RWPE1 (cell line): ENCODE measurements at regions of chr1 and their contacts with region 1.

Region 1: DNA sequence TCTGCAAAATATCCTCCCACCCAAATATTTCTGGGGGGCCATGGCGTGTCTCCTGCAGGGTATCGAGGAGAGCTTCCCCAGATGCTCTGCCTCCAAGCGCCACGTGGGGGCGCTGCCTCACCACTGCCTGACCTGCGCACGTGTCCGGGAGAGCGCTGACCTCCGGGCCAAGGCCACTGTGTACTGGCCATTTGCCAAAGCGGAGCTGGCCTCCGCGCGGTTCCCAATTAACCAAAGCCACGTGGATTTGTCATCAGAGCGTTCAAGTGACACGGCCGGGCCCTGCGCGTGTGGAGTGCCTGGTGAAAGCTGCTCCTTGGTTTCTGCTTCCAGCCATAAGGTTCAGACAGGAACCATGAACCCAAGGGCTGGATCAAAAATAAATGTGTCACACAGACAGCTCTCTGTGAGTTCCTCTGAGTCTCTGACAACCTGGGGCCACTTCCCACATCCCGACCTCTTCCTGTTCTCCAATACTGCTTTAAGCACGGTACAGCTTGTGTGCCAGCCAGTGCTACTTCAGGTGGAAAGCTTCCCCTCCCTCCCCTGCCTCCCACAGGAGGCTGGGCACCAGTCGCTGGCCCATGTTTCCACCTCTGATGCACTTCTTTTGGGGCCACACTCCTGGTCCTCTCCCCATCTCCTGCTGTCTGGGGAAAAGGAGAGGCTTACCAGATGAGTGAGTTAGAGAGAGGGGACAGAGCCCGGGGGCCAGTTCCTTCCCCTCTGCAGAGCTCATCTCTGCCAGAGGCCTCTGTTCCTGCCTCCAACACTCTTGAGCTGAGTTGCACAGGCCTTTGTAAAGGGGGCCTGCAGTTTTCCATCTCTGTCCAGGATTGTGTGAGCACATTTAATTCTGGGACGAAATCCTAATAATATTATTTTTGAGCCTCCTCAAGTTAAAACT is 26.1 kb downstream of the ZP4 start:
- DNase-seq: peak; percentile 38
- H3K27ac ChIP-seq: no peak overlapping the region
- CTCF ChIP-seq: peak; percentile 95

Region 2: GRCh38 chr1:237814319-237814924 is 50.2 kb before region 1 on chr1:
- CTCF ChIA-PET with region 1: no interaction called
- POLR2A ChIA-PET with region 1: no interaction called
- DNase-seq: no peak
- H3K27ac ChIP-seq: no peak overlapping the region
- CTCF ChIP-seq: peak; percentile 23; the same call in 1 of the 2 replicates

Region 3: GRCh38 chr1:237851210-237851845 is 13.3 kb before region 1 on chr1:
- CTCF ChIA-PET with region 1: interaction called, 20 read pairs
- POLR2A ChIA-PET with region 1: no interaction called
- DNase-seq: peak; percentile 29
- H3K27ac ChIP-seq: no peak overlapping the region
- CTCF ChIP-seq: peak; percentile 60

Region 4: GRCh38 chr1:237938553-237938952 is 74.0 kb after region 1 on chr1:
- CTCF ChIA-PET with region 1: interaction called, 13 read pairs
- POLR2A ChIA-PET with region 1: no interaction called
- DNase-seq: no peak
- H3K27ac ChIP-seq: no peak overlapping the region
- CTCF ChIP-seq: no peak